ENCODE measurements at regions of chr4 and their contacts with region 1.

Region 1: DNA sequence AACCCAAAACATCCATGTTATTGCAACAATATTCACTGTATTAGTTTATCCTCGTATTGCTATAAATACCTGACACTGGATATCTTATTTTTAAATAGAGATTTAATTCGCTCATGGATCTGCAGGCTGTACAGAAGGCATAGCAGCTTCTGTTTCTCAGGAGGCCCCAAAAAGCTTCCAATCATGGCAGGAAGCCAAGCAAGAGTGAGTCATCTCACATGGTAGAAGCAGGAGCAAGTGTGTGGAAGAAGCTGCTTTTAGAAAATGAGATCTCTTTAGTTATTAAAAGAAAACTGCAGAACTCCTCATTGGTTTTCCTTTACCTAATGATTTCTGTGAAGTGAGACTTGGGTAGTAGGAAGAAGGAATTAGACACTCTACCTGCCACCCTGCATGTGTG is 16.4 kb downstream of the ZNF732 start:
- DNase-seq: peak; percentile 9
- H3K4me3 ChIP-seq: no peak overlapping the region
- H3K27ac ChIP-seq: no peak overlapping the region
- H3K4me1 ChIP-seq: no peaks in the 10 kb centered on the region
- H3K27me3 ChIP-seq: no peaks in the 10 kb centered on the region
- CTCF ChIP-seq: no peak

Region 2: DNA sequence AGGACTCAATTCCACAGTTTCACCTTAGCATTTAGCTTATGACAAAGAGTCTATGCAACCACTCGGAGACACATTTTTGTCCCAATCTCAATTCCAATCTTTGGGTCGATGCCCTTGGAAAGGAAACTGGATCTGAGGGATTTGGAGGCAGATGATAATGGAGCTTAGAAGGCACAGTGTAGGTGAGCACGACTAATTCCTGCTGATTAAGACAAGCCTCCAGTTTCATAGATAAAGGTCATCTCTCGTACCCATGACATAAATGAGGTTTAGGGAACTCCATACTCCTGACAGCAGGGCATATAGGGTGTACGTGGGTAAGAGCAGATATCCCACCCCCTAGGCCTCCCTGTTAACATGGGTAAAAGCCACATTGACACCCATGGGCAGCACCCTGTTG is 189.0 kb before region 1 on chr4:
- CTCF ChIA-PET with region 1: no interaction called
- dilution Hi-C with region 1: no loop called
- in situ Hi-C with region 1: no loop called
- intact Hi-C with region 1: no loop called
- DNase-seq: no peak
- H3K4me3 ChIP-seq: no peak overlapping the region
- H3K27ac ChIP-seq: no peak overlapping the region
- H3K4me1 ChIP-seq: no peaks in the 10 kb centered on the region
- H3K27me3 ChIP-seq: no peaks in the 10 kb centered on the region
- CTCF ChIP-seq: no peak

Region 3: GRCh38 chr4:217891-218290 is 71.0 kb before region 1 on chr4:
- CTCF ChIA-PET with region 1: no interaction called
- dilution Hi-C with region 1: loop called (anchors 5 kb)
- in situ Hi-C with region 1: no loop called
- intact Hi-C with region 1: no loop called
- DNase-seq: no peak
- H3K4me3 ChIP-seq: no peak overlapping the region
- H3K27ac ChIP-seq: no peak overlapping the region
- H3K4me1 ChIP-seq: no peaks in the 10 kb centered on the region
- H3K27me3 ChIP-seq: no peaks in the 10 kb centered on the region
- CTCF ChIP-seq: no peak

Region 4: GRCh38 chr4:374298-375160 is 85.6 kb after region 1 on chr4:
- CTCF ChIA-PET with region 1: no interaction called
- dilution Hi-C with region 1: loop called (anchors 5 kb)
- in situ Hi-C with region 1: no loop called
- intact Hi-C with region 1: no loop called
- DNase-seq: no peak
- H3K4me3 ChIP-seq: no peak overlapping the region
- H3K27ac ChIP-seq: no peak overlapping the region
- H3K4me1 ChIP-seq: no peaks in the 10 kb centered on the region
- H3K27me3 ChIP-seq: no peaks in the 10 kb centered on the region
- CTCF ChIP-seq: no peak

Measured in mammary epithelial cell (primary cell).